AG04450 (cell line): ENCODE measurements at regions of chrX and their contacts with region 1.

Region 1: GRCh38 chrX:120213436-120214265 is 37.0 kb upstream of the ZBTB33 start:
- DNase-seq: peak; percentile 2
- H3K4me3 ChIP-seq: no peak overlapping the region
- H3K27ac ChIP-seq: no peak overlapping the region
- H3K27me3 ChIP-seq: no peaks in the 10 kb centered on the region
- CTCF ChIP-seq: peak; percentile 79

Region 2: DNA sequence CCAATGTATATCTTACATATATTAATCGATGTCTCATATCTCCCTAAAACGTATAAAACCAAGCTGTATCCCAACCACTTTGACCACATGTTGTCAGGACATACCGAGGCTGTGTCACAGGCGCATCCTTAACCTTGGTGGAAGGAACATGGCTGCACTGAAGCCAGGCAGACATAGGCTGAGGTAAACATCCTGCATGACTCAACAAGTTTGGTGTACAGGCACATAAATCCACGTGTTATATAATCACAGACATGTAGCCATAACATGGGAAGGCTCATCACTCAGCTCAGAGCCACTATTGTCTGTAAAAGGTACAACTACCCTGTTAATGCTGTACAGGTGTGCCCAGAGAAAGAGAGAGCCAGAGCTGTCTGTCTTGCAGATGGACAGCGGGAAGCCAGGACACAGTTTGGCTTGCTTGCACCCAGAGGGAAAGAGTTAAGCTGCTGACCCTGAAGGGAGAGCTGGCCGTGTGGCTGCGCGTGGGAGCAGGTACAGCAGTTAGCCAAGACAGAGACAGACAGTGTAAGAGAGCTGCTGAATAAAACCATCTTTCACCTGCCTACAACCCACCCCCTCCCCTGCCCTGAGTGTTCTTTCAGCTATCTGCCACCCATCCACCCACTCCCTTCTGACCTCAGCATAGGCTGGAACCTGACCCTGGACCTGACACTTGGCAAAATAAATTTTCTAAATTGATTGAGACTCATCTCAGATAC is 14.7 kb after region 1 on chrX:
- CTCF ChIA-PET with region 1: interaction called, 19 read pairs
- POLR2A ChIA-PET with region 1: no interaction called
- DNase-seq: no peak
- H3K4me3 ChIP-seq: no peak overlapping the region
- H3K27ac ChIP-seq: no peak overlapping the region
- H3K27me3 ChIP-seq: no peaks in the 10 kb centered on the region
- CTCF ChIP-seq: no peak